Dendritic cell treated with granulocyte-macrophage colony-stimulating factor and Interleukin-4, amounts not matched to agents 40 ng/mL and 50 ng/mL, for 4 days (primary cell): ENCODE measurements at regions of chr22 and their contacts with region 1.

Region 1: DNA sequence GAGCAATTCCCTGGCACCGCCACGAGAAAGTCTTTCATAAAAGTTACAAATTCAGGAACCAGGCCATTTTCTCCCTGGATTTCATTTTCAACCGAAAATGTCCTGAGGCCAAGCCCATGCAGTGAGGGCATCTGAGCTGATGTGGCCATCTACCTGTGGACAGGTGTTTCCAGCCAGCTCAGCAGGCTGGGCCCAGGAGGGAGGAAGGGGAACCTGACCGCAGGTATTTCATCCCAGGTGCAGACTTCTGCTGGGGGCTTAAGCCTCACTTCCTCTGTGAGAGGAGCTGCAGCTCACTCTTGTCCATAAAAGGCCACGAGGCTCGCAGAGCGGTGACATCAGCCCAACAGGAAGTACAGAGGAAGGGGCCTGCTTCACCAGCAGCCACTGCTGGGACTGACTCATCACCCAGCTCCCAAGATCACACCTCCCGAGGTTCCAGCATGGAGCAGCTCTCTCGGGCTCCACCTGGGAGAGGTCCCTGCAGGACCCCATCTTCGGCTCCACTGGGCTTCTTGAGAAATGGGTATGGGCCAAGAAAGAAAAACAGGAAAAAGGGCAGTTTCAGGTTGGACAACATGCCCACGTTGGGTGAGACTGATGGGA is 56.4 kb downstream of the MYH9 start:
- H3K4me3 Mint-ChIP-seq: peak overlapping the region; percentile 61
- H3K27ac Mint-ChIP-seq: peak overlapping the region; percentile 88
- H3K4me1 Mint-ChIP-seq: peaks cover 82% of the 10 kb centered on the region
- H3K27me3 Mint-ChIP-seq: no peaks in the 10 kb centered on the region

Region 2: GRCh38 chr22:36369922-36370791 is 38.7 kb after region 1 on chr22:
- intact Hi-C with region 1: loop called (anchors 5 kb)
- H3K4me3 Mint-ChIP-seq: peak overlapping the region; percentile 60
- H3K27ac Mint-ChIP-seq: peak overlapping the region; percentile 84
- H3K4me1 Mint-ChIP-seq: peaks cover 94% of the 10 kb centered on the region
- H3K27me3 Mint-ChIP-seq: no peaks in the 10 kb centered on the region

Region 3: DNA sequence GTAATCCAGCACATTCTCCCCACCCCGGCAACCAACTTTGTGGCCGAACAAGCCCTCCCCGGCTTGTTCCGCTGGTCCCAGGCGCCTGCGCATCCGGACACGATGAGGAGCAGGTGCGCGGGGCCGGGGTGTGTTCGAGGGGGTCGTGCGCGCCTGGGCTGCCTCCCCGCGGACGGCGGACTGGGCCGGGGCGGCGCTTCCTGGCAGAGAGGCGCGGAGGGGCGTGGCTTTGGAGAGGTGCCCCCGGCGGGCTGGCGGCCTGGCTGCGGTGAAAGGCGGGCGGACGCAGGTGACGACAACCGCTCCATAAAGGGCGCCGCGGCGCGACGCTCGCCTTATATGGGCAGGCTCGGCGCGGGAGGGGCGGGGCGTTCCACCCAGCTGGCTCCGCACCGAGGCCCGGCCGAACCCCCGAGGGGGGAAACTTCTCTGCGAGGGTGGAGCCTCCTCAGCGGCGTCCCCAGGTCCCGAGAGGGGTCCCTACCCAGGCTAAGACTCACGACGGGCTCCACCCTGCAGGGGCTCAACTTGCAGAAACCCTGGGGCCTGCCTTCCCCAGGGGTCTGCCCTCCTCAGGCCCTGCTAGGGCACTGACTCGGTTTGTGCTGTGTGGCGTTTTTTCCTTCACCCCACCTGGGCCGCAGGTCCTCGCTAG is 123.6 kb after region 1 on chr22:
- intact Hi-C with region 1: loop called (anchors 5 kb)
- H3K4me3 Mint-ChIP-seq: peak overlapping the region; percentile 68
- H3K27ac Mint-ChIP-seq: peak overlapping the region; percentile 68
- H3K4me1 Mint-ChIP-seq: peaks cover 47% of the 10 kb centered on the region
- H3K27me3 Mint-ChIP-seq: peaks cover 2% of the 10 kb centered on the region